ENCODE measurements at regions of chr6 and their contacts with region 1.

Region 1: GRCh38 chr6:133916650-133917151 is 27.8 kb downstream of the TCF21 start:
- DNase-seq: peak; percentile 90 to 96
- ATAC-seq: peak; percentile 86
- H3K4me3 ChIP-seq: no peak overlapping the region
- H3K27ac ChIP-seq: no peak overlapping the region
- H3K4me1 ChIP-seq: peaks cover 0 to 3% of the 10 kb centered on the region in 2 donors
- H3K27me3 ChIP-seq: no peaks in the 10 kb centered on the region

Region 2: DNA sequence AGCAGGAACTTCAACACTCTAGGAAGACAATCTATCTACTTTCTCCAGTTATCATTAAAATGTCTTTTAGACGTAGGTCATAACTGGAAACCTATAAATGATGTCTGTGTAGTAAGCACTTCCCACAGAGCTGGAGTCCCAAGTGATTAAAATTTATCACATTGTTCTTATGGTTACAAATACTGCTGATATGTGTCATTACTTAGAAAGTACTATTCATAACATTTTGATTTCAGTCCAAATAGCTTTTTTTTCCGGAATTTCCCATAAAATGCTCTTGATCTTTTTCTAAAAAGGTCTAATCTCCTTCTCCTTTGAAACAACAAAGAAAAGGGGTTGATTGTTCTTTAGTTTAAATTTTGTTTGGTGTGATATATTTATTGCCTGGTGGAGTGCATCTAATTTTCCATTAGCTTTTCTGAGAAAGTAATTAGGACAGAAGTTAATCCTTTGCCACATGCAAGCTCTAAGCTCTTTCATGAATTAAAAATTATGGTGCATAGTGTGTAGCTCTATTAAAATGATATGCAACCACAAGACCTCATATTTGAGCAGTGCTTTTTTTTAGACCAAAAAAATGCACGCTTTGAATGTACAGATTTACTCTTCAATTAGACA is 160.5 kb before region 1 on chr6:
- intact Hi-C with region 1: no loop called
- DNase-seq: no peak
- ATAC-seq: peak; percentile 53
- H3K4me3 ChIP-seq: no peak overlapping the region
- H3K27ac ChIP-seq: no peak overlapping the region
- H3K4me1 ChIP-seq: peaks cover 4 to 16% of the 10 kb centered on the region in 2 donors
- H3K27me3 ChIP-seq: no peaks in the 10 kb centered on the region

Region 3: DNA sequence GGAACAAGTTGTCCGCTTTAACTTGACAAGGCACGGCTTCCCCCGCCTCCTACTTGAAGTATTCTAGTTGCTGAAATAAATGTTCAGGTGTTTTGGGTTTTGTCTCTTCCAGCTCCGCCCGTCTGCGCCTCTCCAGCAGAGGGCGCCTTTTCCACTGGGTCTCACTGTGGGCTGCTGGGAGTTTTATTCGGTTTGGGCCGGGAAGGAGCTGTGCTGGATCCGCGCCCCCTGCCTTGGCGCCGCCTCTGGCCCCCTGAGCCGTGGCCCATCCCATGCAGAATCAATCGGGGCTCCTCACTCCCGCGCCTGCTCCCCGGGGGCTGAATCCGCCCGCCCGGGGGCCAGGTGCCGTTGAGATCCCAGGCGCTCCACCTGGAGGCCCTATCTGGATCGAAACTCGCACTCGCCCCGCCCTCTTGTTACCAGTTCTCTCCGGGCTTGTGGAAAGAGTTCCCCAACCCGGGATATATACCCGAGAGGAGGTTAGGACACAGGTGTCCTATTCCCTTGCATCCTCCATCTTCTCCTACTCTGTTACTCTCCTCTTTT is 78.8 kb before region 1 on chr6:
- intact Hi-C with region 1: loop called in 1 of 2 experiments (anchors 10 kb)
- DNase-seq: peak; percentile 64 to 81
- ATAC-seq: peak; percentile 59
- H3K4me3 ChIP-seq: peak overlapping the region; percentile 22 to 60
- H3K27ac ChIP-seq: no peak overlapping the region
- H3K4me1 ChIP-seq: no peaks in the 10 kb centered on the region
- H3K27me3 ChIP-seq: no peaks in the 10 kb centered on the region

Region 4: DNA sequence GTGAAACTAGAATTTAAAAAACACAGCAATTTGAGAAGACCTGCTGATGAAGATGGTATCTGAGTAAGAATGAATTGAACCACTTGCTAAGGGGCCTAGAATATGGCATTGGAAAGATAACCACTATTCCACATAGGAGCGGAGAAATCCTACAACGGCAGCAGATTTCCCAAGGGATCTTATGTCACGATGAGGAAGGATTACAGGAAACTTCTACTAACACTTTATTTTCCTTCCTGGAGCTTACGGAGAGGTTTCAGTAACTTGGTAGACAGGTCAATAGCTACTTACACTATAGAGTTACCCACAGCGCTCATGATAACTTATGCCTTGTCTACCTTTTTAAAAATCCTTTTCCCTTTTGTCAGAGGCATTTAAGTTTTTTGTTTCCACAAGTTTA is 39.6 kb before region 1 on chr6:
- intact Hi-C with region 1: no loop called
- DNase-seq: no peak
- ATAC-seq: no peak
- H3K4me3 ChIP-seq: no peak overlapping the region
- H3K27ac ChIP-seq: no peak overlapping the region
- H3K4me1 ChIP-seq: no peaks in the 10 kb centered on the region
- H3K27me3 ChIP-seq: no peaks in the 10 kb centered on the region

Region 5: GRCh38 chr6:133891149-133891926 is 25.4 kb before region 1 on chr6:
- intact Hi-C with region 1: no loop called
- DNase-seq: peak in 1 of 2 donors; percentile 51
- ATAC-seq: peak; percentile 30
- H3K4me3 ChIP-seq: peak overlapping the region in 1 of 2 donors; percentile 21
- H3K27ac ChIP-seq: no peak overlapping the region
- H3K4me1 ChIP-seq: no peaks in the 10 kb centered on the region
- H3K27me3 ChIP-seq: no peaks in the 10 kb centered on the region